Activated T-helper 1 cell treated with anti-CD3 and anti-CD28 coated beads, Interleukin-12 subunit alpha, Interleukin-12 subunit beta, Interleukin-2, Interleukin-4 antibody, amounts not matched to agents 30 ng/mL and 10 ng/mL and 1 ng/mL, durations not matched to agents 14 hours and 24 hours and 36 hours (primary cell): ENCODE measurements at regions of chr4 and their contacts with region 1.

Region 1: DNA sequence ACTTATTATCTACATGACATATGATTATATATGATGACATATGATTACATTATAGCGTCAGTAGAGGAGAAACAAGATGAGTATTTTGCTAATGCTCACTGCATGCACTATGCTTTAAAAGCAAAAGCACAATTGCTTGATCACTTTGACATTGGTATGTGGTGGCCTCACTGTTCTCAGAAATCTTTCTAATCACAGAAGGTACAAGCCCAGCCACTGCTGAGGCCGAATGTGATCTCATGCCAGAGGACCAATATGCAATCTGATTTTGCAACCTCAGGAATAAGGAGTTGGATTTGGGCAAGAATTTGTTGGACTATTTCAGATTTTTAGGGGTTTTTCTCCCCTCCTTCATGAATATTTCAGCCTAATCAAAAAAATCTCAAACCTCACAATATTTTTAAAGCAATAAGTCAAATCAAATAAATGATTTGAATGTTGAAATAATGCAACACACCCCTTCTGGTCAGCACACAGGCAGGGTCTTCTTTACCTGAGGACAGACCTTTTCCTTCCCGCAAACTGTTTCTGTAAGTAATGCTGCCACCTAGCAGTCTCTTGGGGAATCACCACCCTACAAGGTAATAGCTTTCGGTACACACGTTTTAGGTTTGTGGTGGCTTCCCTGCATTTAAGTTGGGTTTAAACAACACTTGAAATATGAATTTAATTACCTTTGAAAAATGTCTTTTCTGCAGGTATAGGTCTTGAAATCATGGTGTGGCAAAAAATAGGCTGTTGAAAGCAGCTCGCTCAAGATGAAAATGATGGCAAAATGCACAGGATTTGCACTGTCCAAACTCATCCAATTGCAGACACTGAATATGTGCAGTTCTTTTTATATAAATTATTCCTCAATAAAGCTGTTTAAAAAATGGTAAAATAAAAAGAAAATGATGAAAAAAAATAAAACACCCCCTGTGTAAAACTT is 4.8 kb upstream of the CXCL13 start:
- DNase-seq: no peak
- H3K4me3 Mint-ChIP-seq: no peak overlapping the region
- H3K27ac Mint-ChIP-seq: no peak overlapping the region
- H3K4me1 Mint-ChIP-seq: peaks cover 33% of the 10 kb centered on the region
- H3K27me3 Mint-ChIP-seq: peaks cover 7% of the 10 kb centered on the region

Region 2: GRCh38 chr4:77367638-77368037 is 233.1 kb before region 1 on chr4:
- intact Hi-C with region 1: loop called (anchors 5 kb)
- DNase-seq: no peak
- H3K4me3 Mint-ChIP-seq: no peak overlapping the region
- H3K27ac Mint-ChIP-seq: no peak overlapping the region
- H3K4me1 Mint-ChIP-seq: no peaks in the 10 kb centered on the region
- H3K27me3 Mint-ChIP-seq: peaks cover 3% of the 10 kb centered on the region

Region 3: GRCh38 chr4:77433418-77433733 is 167.4 kb before region 1 on chr4:
- intact Hi-C with region 1: loop called (anchors 1 kb)
- DNase-seq: peak; percentile 4
- H3K4me3 Mint-ChIP-seq: no peak overlapping the region
- H3K27ac Mint-ChIP-seq: no peak overlapping the region
- H3K4me1 Mint-ChIP-seq: peaks cover 8% of the 10 kb centered on the region
- H3K27me3 Mint-ChIP-seq: no peaks in the 10 kb centered on the region

Region 4: DNA sequence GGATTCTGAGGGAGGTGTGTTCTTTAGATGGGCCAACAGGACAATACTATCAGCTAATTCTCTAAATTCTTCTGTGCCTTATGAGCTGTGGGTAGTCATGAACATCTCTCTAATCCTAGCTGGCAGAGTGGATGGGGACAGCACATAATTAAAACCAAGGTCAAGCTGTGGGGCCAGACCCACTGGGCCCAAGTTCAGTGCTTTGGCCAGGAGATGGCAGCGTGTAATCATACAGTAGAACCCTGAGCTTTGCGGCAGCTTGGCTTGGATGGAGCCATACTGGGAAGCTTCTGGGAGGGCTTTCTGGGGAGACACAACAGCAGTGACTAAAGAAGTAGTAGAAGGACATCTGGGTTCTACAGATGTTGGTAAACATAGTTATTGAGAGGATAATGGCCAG is 135.5 kb before region 1 on chr4:
- intact Hi-C with region 1: loop called (anchors 1 kb)
- DNase-seq: no peak
- H3K4me3 Mint-ChIP-seq: no peak overlapping the region
- H3K27ac Mint-ChIP-seq: peak overlapping the region; percentile 5
- H3K4me1 Mint-ChIP-seq: peaks cover 7% of the 10 kb centered on the region
- H3K27me3 Mint-ChIP-seq: peaks cover 12% of the 10 kb centered on the region

Region 5: DNA sequence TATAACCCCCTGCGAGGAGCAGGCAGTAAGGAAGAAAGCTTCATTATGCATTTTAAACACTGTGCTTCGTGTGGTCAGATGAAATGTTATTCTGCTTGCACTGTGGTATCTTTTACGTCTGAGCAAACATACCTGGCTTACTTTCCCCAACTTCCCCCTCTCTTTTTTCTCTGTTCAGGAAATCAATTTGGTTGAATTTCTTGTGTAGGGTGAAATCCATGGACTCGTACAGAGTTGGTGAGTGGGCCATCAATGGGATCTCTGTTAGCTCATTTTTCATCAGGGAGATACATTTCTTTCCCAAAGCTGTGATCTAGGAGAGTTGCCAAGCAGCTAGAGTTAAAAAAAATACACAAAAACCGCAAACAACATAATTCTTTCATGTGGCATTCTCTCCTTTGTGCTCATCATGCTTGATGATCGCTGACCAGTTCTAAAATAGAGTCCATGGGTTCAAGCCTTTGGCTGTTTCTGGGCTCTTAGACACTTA is 554.9 kb after region 1 on chr4:
- intact Hi-C with region 1: no loop called
- DNase-seq: no peak
- H3K4me3 Mint-ChIP-seq: no peak overlapping the region
- H3K27ac Mint-ChIP-seq: no peak overlapping the region
- H3K4me1 Mint-ChIP-seq: no peaks in the 10 kb centered on the region
- H3K27me3 Mint-ChIP-seq: peaks cover 5% of the 10 kb centered on the region